A549 (cell line): ENCODE measurements at regions of chr3 and their contacts with region 1.

Region 1: GRCh38 chr3:14508961-14509795 is 31.0 kb downstream of the GRIP2 start:
- DNase-seq: peak; percentile 48 to 81
- ATAC-seq: peak; percentile 69 to 87
- H3K4me3 ChIP-seq: no peak overlapping the region
- H3K27ac ChIP-seq: peak overlapping the region in 1 of 2 experiments; percentile 31; a peak in 1 of 6 replicates
- H3K4me1 ChIP-seq: no peaks in the 10 kb centered on the region
- CTCF ChIP-seq: peak; percentile 92
- EP300 ChIP-seq: no peak
- POLR2A ChIP-seq: no peak
- RAD21 ChIP-seq: peak; percentile 80 to 91

Region 2: GRCh38 chr3:14497321-14497720 is 11.9 kb before region 1 on chr3:
- CTCF ChIA-PET with region 1: interaction called, 49 read pairs
- POLR2A ChIA-PET with region 1: no interaction called
- DNase-seq: no peak
- ATAC-seq: peak in 1 of 2 experiments; percentile 20; a peak in 1 of 6 replicates
- H3K4me3 ChIP-seq: no peak overlapping the region
- H3K27ac ChIP-seq: no peak overlapping the region
- H3K4me1 ChIP-seq: no peaks in the 10 kb centered on the region
- CTCF ChIP-seq: no peak
- EP300 ChIP-seq: no peak
- POLR2A ChIP-seq: no peak
- RAD21 ChIP-seq: no peak; a peak in 1 of 5 replicates

Region 3: GRCh38 chr3:14525685-14526631 is 16.8 kb after region 1 on chr3:
- CTCF ChIA-PET with region 1: interaction called, 58 read pairs
- POLR2A ChIA-PET with region 1: no interaction called
- DNase-seq: no peak
- ATAC-seq: peak; percentile 17 to 29; a peak in 4 of 6 replicates
- H3K4me3 ChIP-seq: no peak overlapping the region
- H3K27ac ChIP-seq: no peak overlapping the region
- H3K4me1 ChIP-seq: no peaks in the 10 kb centered on the region
- CTCF ChIP-seq: no peak
- EP300 ChIP-seq: no peak
- POLR2A ChIP-seq: no peak
- RAD21 ChIP-seq: no peak

Region 4: DNA sequence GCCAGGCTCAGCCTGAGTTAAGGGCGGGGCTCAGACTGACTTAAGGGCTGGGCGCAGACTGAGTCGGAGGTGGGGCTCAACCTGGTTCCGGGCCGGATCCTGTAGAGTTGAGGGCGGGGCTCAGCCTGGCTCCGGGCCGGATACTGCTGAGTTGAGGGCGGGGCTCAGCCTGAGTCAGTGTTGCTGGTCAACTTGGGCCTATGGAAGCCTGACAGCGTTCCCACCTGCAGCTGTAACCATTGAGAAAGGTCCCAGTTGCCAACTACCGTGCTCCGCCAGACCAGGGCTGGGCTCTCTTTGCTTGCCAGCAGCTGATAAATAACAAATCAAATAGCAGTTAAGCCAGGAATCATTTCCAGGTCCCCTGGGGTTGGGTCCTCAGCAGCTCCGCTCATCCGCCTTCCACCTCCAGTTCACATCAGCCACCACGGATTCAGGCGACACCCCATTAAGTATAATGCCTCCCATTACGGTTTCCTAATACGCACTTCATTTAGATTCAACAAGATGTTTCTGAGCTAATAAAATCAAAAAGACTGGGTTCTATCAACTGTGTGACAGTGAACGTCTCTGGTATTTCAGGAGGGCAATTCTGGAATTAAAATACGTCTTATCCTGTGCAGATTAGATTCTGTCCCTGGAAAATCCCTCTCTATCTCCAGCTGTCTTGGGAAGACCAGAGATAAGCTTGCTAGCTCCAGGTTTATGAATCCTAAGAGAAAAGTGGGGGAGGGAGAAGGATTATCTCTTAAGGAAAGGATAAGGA is 23.7 kb after region 1 on chr3:
- CTCF ChIA-PET with region 1: interaction called, 28 read pairs
- POLR2A ChIA-PET with region 1: no interaction called
- DNase-seq: no peak
- ATAC-seq: peak in 1 of 2 experiments; percentile 74; a peak in 3 of 6 replicates
- H3K4me3 ChIP-seq: no peak overlapping the region
- H3K27ac ChIP-seq: no peak overlapping the region
- H3K4me1 ChIP-seq: no peaks in the 10 kb centered on the region
- CTCF ChIP-seq: no peak
- EP300 ChIP-seq: no peak
- POLR2A ChIP-seq: no peak
- RAD21 ChIP-seq: no peak

Region 5: DNA sequence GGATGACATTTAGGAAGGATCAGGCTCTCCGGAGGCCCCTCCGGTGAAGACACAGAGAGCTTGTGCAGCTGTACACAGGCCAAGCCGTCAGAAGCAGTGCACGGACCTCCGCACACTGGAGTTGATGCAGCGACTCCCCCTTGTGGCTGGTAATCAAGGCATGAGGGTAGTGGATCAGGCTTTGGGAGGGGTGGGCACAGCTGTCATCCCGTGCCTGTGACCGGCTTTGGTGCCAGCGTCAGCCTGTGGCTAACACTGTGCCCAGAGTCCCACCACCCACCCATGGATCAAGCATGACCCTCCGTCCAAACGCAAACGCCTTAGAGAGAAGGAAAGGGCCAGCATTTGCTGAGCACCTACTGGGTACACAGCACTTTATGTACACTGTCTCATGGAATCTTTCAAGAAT is 39.1 kb after region 1 on chr3:
- CTCF ChIA-PET with region 1: interaction called, 63 read pairs
- POLR2A ChIA-PET with region 1: no interaction called
- DNase-seq: peak; percentile 67 to 76
- ATAC-seq: peak; percentile 86 to 96
- H3K4me3 ChIP-seq: no peak overlapping the region
- H3K27ac ChIP-seq: peak overlapping the region in 1 of 2 experiments; percentile 28; a peak in 1 of 6 replicates
- H3K4me1 ChIP-seq: peaks cover 16% of the 10 kb centered on the region
- CTCF ChIP-seq: peak; percentile 78
- EP300 ChIP-seq: no peak
- POLR2A ChIP-seq: no peak
- RAD21 ChIP-seq: peak; percentile 73 to 82

Region 6: DNA sequence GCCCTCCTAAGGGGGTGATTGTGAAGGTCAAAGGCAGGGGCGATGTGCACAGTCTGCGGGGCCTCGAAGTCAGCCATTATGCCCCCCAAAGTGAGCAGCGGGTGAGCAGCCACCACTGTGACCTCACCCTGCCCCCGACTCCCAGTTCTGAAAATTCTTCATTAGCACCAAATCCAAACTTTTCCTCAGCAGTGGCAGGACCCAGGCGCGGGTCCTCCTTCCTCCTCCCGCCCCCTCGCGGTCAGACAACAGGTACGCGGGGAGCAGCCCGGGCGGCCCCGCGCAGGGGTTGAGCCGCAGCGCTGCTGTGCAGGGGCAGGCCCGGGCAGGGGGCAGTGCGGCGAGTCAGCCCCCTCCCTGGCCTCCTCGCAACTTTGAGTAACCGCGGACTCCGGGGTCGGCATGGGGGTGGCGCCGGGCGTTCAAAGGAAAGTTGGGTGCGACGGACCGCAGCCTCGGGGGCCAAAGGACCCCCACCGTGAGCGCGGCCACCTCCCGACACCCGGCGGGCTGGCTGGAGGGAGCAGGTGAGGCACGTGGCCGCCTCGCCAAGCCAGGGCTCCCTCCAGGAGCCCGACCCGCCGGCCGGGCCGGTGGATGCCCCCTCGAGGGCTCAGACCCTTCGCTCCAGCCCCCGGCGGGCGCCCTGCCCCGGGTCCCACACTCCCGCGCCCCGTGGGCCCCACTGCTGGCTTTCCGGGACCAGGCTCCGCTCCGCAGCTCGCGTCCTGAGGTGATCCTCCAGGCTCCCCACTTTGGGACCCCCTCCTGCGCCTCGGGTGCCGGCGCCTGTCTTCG is 93.0 kb after region 1 on chr3:
- CTCF ChIA-PET with region 1: interaction called, 18 read pairs
- POLR2A ChIA-PET with region 1: no interaction called
- DNase-seq: peak; percentile 30 to 63
- ATAC-seq: peak; percentile 63 to 82; a peak in 4 of 6 replicates
- H3K4me3 ChIP-seq: peak overlapping the region; percentile 57
- H3K27ac ChIP-seq: peak overlapping the region; percentile 48 to 86
- H3K4me1 ChIP-seq: peaks cover 12% of the 10 kb centered on the region; the same call in 1 of the 3 replicates
- CTCF ChIP-seq: peak; percentile 47
- EP300 ChIP-seq: no peak
- POLR2A ChIP-seq: no peak
- RAD21 ChIP-seq: peak; percentile 21 to 47; a peak in 3 of 5 replicates

Region 7: GRCh38 chr3:14647976-14648955 is 139.1 kb after region 1 on chr3:
- CTCF ChIA-PET with region 1: interaction called, 10 read pairs
- POLR2A ChIA-PET with region 1: no interaction called
- DNase-seq: peak in 1 of 2 experiments; percentile 18
- ATAC-seq: no peak
- H3K4me3 ChIP-seq: no peak overlapping the region
- H3K27ac ChIP-seq: no peak overlapping the region
- H3K4me1 ChIP-seq: peaks cover 27% of the 10 kb centered on the region; the same call in 2 of the 3 replicates
- CTCF ChIP-seq: no peak
- EP300 ChIP-seq: no peak
- POLR2A ChIP-seq: no peak
- RAD21 ChIP-seq: no peak